ENCODE measurements at regions of chr17 and their contacts with region 1.

Region 1: DNA sequence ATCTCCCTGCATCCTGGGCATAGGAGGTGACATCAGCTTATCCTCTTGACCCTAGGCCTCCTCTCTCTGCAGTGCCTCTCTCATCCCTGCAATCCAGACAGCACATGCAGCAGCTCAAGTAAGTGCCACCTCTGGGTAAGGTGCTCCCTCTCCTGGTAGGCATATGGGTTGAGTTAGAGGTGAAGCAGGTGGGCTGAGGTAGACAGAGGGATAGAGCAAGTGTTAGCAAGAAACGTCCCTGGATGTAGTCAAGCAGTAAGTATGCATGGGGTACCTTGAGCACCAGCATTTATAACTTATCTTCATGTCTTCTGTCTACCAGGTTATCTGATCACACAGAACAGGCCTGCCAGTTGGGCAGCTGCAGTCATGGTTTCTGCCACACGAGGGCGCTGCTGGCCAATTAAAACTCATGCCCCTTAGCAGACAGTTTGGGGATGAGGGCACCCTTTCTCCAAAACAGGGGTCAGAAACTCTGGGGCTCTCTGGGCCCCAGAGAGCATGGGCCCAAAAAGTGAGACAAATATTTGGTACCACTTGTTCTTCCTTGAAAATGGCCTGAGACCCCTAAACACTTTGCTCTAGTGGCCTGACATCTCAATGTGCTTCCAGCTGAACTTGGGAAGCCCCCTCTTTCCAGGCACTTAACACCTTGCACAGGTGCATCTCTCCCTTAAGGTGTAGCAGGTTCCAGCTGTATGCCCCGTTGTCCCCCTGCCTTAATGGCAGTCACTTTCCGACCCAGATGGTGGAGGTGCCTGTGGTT is 59.8 kb downstream of the NEUROD2 start:
- DNase-seq: peak; percentile 31
- ATAC-seq: peak; percentile 97
- H3K4me3 ChIP-seq: no peak overlapping the region
- H3K27ac ChIP-seq: no peak overlapping the region
- H3K4me1 ChIP-seq: no peaks in the 10 kb centered on the region
- H3K27me3 ChIP-seq: no peaks in the 10 kb centered on the region
- CTCF ChIP-seq: peak; percentile 80 to 98 (median 84)
- EP300 ChIP-seq: no peak
- POLR2A ChIP-seq: no peak
- RAD21 ChIP-seq: peak; percentile 83

Region 2: DNA sequence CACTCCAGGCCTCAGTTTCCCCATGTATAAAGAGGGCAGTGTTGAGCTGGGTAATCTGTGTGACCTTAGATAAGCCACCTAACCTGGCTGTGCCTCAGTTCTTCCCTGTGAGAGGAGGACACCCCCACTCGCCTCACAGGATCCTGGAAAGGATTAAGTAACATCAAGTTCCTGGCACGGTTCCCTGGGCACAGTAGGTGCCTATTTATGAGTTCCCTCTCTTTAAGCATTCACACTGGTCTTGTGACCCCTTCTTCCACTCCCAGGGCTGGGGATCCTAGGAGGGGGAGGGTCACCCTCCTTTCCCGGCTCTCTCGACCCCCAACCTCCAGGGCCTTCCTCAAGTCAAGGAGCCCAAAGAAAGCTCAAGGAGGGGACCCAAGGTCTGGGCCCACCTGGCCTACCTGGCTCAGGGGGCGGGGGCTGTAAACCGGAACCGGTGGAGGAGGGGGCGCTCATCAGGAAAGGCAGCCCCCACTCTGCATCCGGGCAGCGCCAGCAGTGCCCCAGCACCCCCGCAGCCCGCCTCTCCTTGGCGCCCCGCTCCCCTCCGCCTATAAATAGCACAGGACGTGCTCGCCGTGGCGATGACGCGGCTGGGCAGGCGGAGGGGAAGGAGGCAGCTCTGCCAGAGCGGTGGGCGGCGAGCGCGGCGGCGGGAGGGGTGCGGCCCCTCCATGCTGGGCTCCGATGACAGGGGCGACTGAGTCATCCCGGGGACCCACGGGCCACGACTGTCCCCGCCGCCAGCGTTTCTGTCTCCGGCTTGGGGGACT is 338.4 kb before region 1 on chr17:
- CTCF ChIA-PET with region 1: interaction called, 21 read pairs
- POLR2A ChIA-PET with region 1: no interaction called
- RAD21 ChIA-PET with region 1: interaction called, 11 read pairs
- SMC1A ChIA-PET with region 1: interaction called, 4 read pairs
- in situ Hi-C with region 1: no loop called
- intact Hi-C with region 1: no loop called
- DNase-seq: no peak
- ATAC-seq: peak; percentile 12
- H3K4me3 ChIP-seq: peak overlapping the region; percentile 34; the same call in 1 of the 2 replicates
- H3K27ac ChIP-seq: no peak overlapping the region; the same call in 1 of the 2 replicates
- H3K4me1 ChIP-seq: peaks cover 27% of the 10 kb centered on the region
- H3K27me3 ChIP-seq: peaks cover 2 to 3% of the 10 kb centered on the region in 2 experiments; a peak in 1 of 4 replicates
- CTCF ChIP-seq: no peak
- EP300 ChIP-seq: no peak
- POLR2A ChIP-seq: peak; percentile 41; the same call in 1 of the 2 replicates
- RAD21 ChIP-seq: no peak

Region 3: DNA sequence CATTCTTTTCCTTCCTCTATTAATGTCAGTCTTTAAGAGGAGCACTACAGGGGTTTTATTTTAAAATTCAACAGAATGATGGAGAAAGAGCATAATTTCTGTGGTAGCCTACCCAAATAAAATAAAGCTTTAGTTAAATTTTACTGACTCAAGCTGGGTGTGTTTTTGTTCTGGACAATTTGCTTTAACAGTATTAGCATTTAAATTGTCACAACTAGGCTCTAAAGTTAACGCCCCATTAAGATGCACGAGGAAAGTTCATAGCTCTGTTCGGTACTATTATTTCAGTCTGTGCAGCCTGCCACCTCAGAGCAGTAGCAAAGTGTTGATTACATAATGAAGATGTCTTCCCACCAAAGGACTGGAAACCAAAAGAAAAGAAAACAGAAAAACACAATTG is 34.6 kb before region 1 on chr17:
- CTCF ChIA-PET with region 1: interaction called, 11 read pairs
- POLR2A ChIA-PET with region 1: no interaction called
- RAD21 ChIA-PET with region 1: no interaction called
- SMC1A ChIA-PET with region 1: no interaction called
- in situ Hi-C with region 1: no loop called
- intact Hi-C with region 1: no loop called
- DNase-seq: no peak
- ATAC-seq: no peak
- H3K4me3 ChIP-seq: no peak overlapping the region
- H3K27ac ChIP-seq: no peak overlapping the region
- H3K4me1 ChIP-seq: no peaks in the 10 kb centered on the region
- H3K27me3 ChIP-seq: no peaks in the 10 kb centered on the region
- CTCF ChIP-seq: no peak
- EP300 ChIP-seq: no peak
- POLR2A ChIP-seq: no peak
- RAD21 ChIP-seq: no peak

Region 4: GRCh38 chr17:39636927-39637736 is 89.2 kb after region 1 on chr17 and contains the start of gene STARD3:
- CTCF ChIA-PET with region 1: interaction called, 12 read pairs
- POLR2A ChIA-PET with region 1: no interaction called
- RAD21 ChIA-PET with region 1: no interaction called
- SMC1A ChIA-PET with region 1: no interaction called
- in situ Hi-C with region 1: no loop called
- intact Hi-C with region 1: no loop called
- DNase-seq: no peak
- ATAC-seq: peak; percentile 97
- H3K4me3 ChIP-seq: peak within 1 kb of the TSS; percentile 100
- H3K27ac ChIP-seq: peak within 1 kb of the TSS; percentile 90
- H3K4me1 ChIP-seq: peaks cover 20% of the 10 kb centered on the region
- H3K27me3 ChIP-seq: no peaks in the 10 kb centered on the region
- CTCF ChIP-seq: peak in 1 of 3 experiments; percentile 12; a peak in 2 of 6 replicates
- EP300 ChIP-seq: no peak
- POLR2A ChIP-seq: peak; percentile 91
- RAD21 ChIP-seq: no peak
- polyA plus RNA-seq, gene STARD3: 0.08 to 1.4 TPM

Region 5: GRCh38 chr17:39662551-39663339 is 114.8 kb after region 1 on chr17:
- CTCF ChIA-PET with region 1: no interaction called
- POLR2A ChIA-PET with region 1: no interaction called
- RAD21 ChIA-PET with region 1: no interaction called
- SMC1A ChIA-PET with region 1: no interaction called
- in situ Hi-C with region 1: no loop called
- intact Hi-C with region 1: no loop called
- DNase-seq: no peak
- ATAC-seq: no peak
- H3K4me3 ChIP-seq: no peak overlapping the region
- H3K27ac ChIP-seq: no peak overlapping the region
- H3K4me1 ChIP-seq: peaks cover 6% of the 10 kb centered on the region; the same call in 1 of the 2 replicates
- H3K27me3 ChIP-seq: peaks cover 3 to 4% of the 10 kb centered on the region in 2 experiments; a peak in 3 of 4 replicates
- CTCF ChIP-seq: no peak
- EP300 ChIP-seq: no peak
- POLR2A ChIP-seq: no peak
- RAD21 ChIP-seq: no peak

Region 6: DNA sequence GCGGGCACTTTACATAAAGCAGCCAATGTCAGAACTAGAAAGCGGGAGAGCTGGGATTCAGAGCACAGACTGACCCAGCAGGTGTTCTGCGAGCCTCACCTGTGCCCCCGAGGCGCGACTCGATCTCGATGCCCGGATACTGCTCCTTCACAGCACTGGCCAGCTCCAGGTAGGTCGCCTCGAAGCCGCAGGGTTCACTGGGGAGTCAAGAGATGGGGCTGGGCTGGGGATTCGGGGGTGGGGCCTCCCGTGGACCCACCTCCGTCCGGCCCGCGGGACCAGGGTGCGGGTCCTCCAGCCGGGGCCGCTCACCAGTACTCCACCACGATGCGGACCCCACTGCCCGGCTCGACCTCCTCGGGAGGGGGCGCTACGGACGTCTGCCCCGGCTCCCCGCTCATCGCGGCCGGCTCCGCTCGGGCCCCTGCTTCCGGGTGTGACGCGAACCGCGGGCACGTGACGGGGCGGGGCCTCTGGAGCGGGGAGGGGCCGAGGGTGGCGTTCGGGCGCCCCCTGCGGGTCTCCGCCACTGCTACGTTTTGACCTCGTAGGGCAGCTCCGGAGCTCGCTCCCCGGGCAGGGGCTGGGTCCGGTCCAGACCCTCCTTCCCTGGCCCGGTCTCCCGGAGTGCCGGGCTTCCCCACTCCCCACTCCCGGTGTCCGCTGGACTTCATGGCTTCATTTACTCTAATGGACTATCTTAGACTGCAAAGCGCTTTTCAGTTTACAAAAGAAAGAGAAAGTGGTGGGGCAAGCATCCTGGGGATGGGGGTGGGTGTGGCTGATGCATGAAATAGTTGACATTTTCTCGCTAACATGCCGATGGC is 182.4 kb after region 1 on chr17 and contains the start of gene MIEN1:
- CTCF ChIA-PET with region 1: interaction called, 12 read pairs
- POLR2A ChIA-PET with region 1: no interaction called
- RAD21 ChIA-PET with region 1: no interaction called
- SMC1A ChIA-PET with region 1: no interaction called
- in situ Hi-C with region 1: no loop called
- intact Hi-C with region 1: no loop called
- DNase-seq: peak; percentile 43
- ATAC-seq: peak; percentile 96
- H3K4me3 ChIP-seq: peak within 1 kb of the TSS; percentile 91
- H3K27ac ChIP-seq: peak within 1 kb of the TSS; percentile 88
- H3K4me1 ChIP-seq: peaks cover 3% of the 10 kb centered on the region; the same call in 1 of the 2 replicates
- H3K27me3 ChIP-seq: no peaks in the 10 kb centered on the region
- CTCF ChIP-seq: peak; percentile 71 to 90 (median 85)
- EP300 ChIP-seq: 0 out of 4 replicates have a peak, but pooled peaks of 1 of the 2 experiments have one; percentile 13
- POLR2A ChIP-seq: peak; percentile 98
- RAD21 ChIP-seq: peak; percentile 44
- polyA plus RNA-seq, gene MIEN1: 24.9 to 42.5 TPM

Region 7: DNA sequence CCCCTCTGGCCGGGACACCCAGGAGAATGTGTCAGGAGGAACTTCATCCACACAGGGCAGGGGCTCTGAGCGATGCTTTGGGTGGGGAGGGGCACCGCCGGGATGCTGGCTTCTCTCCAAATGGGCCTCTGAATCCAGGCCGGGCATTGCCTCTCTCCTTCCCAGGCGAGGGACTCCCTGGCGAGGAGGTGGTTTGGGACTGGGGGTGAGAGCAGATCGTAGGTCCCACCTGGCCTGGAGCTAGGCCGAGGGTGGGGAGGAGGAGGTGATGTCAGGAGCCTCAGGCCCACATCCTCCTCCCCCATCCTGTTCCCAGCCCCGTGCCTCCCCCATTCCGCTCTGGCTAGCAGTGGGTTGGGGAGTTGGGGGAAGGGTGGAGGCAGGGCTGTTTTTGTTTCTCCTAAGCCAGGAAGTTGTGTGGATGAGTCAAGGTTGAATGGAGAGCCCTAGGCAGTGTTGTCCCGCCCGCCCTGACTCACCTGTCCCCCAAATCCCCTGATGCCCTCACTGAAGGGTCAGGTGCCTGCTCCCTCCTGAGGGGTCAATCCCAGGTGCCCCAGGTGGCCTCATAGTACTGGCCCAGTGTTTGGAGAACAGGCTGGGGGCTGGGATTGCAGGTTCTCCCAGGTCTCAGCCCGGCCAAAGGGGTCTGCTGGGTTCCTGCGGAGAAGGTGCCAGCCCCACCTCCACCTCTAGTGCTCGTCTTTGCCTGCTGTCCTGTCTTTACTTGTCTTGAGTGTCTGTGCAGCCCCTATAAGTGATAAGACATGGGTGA is 192.6 kb after region 1 on chr17:
- CTCF ChIA-PET with region 1: no interaction called
- POLR2A ChIA-PET with region 1: no interaction called
- RAD21 ChIA-PET with region 1: no interaction called
- SMC1A ChIA-PET with region 1: no interaction called
- in situ Hi-C with region 1: no loop called
- intact Hi-C with region 1: no loop called
- DNase-seq: no peak
- ATAC-seq: no peak
- H3K4me3 ChIP-seq: no peak overlapping the region
- H3K27ac ChIP-seq: no peak overlapping the region
- H3K4me1 ChIP-seq: peaks cover 10% of the 10 kb centered on the region
- H3K27me3 ChIP-seq: peaks cover 0 to 2% of the 10 kb centered on the region in 2 experiments; a peak in 2 of 4 replicates
- CTCF ChIP-seq: no peak
- EP300 ChIP-seq: no peak
- POLR2A ChIP-seq: no peak
- RAD21 ChIP-seq: no peak

Measured in GM12878 (cell line).